IMR-90 (cell line): ENCODE measurements at regions of chr14 and their contacts with region 1.

Region 1: DNA sequence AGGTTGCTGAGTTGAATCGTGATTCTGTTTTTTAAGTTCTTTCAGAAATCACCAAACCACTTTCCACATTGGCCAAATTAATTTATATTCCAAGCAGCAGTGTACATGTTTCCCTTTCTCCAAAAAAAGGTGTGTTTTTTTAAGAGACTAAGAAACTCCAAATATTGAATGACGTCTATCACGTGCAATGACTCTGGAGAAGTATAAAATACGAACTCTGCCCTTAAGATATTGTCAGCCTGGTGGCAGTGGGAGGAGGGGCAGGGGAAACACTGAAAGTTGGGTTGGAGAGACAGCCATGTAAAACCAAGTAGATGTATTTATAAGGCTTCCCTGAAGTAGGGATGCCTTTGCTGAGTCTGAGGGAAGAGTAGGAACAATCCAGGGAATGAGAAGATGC is 50.1 kb upstream of the DHRS4 start:
- DNase-seq: no peak
- ATAC-seq: no peak
- H3K4me3 ChIP-seq: no peak overlapping the region
- H3K27ac ChIP-seq: no peak overlapping the region
- H3K4me1 ChIP-seq: no peaks in the 10 kb centered on the region
- H3K27me3 ChIP-seq: no peaks in the 10 kb centered on the region; the same call in 1 of the 2 replicates
- CTCF ChIP-seq: no peak
- POLR2A ChIP-seq: no peak
- RAD21 ChIP-seq: no peak

Region 2: DNA sequence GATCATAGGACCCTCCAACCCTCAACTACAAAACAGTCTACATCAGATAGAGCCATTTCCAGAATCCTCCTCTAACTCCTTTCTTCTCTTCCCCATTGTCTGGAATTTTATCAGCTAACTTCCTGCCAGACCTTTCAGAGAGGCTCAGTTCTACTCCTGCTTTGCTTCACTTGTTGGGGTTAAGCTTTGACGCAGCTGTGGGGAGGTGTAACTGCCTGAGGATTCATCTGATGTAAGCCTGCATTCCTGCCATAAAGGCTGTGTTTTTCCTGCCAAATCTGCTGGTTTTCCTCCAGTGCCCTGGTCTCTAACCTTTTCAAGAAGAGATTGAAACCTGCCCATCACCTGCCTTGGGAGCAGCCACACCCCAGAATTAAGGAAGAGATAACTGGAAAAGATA is 250.4 kb before region 1 on chr14:
- CTCF ChIA-PET with region 1: no interaction called
- POLR2A ChIA-PET with region 1: no interaction called
- dilution Hi-C with region 1: no loop called
- in situ Hi-C with region 1: loop called (anchors 10 kb)
- intact Hi-C with region 1: no loop called
- DNase-seq: peak; percentile 5
- ATAC-seq: no peak
- H3K4me3 ChIP-seq: no peak overlapping the region
- H3K27ac ChIP-seq: no peak overlapping the region
- H3K4me1 ChIP-seq: no peaks in the 10 kb centered on the region
- H3K27me3 ChIP-seq: peaks cover 3% of the 10 kb centered on the region
- CTCF ChIP-seq: no peak
- POLR2A ChIP-seq: no peak
- RAD21 ChIP-seq: no peak